ENCODE measurements at regions of chr6 and their contacts with region 1.

Region 1: GRCh38 chr6:28895134-28895812 is 28.5 kb downstream of the TRIM27 start:
- DNase-seq: peak; percentile 58 to 96 (median 86)
- H3K4me3 ChIP-seq: peak overlapping the region; percentile 50 to 97 (median 81)
- H3K27ac ChIP-seq: peak overlapping the region; percentile 92 to 100 (median 98)
- H3K27me3 ChIP-seq: no peaks in the 10 kb centered on the region
- CTCF ChIP-seq: peak in 9 of 56 donors; percentile 5 to 28 (median 16)

Region 2: GRCh38 chr6:28863604-28864320 is 31.5 kb before region 1 on chr6:
- intact Hi-C with region 1: loop called (anchors 2 kb)
- DNase-seq: peak; percentile 67 to 87 (median 79)
- H3K4me3 ChIP-seq: peak overlapping the region; percentile 52 to 97 (median 82)
- H3K27ac ChIP-seq: peak overlapping the region in 56 of 59 donors; percentile 1 to 92 (median 74)
- H3K27me3 ChIP-seq: no peaks in the 10 kb centered on the region
- CTCF ChIP-seq: peak in 17 of 56 donors; percentile 2 to 40 (median 16)

Region 3: GRCh38 chr6:28880894-28881780 is 14.1 kb before region 1 on chr6:
- intact Hi-C with region 1: loop called in 1 of 2 experiments (anchors 2 kb)
- DNase-seq: peak; percentile 51 to 83 (median 68)
- H3K4me3 ChIP-seq: peak overlapping the region; percentile 33 to 79 (median 64)
- H3K27ac ChIP-seq: peak overlapping the region in 13 of 59 donors; percentile 0 to 55 (median 17)
- H3K27me3 ChIP-seq: peaks cover 0 to 45% (median 2%) of the 10 kb centered on the region in 45 donors
- CTCF ChIP-seq: peak in 4 of 56 donors; percentile 13 to 23 (median 18)

Region 4: GRCh38 chr6:28923318-28924102 is 28.2 kb after region 1 on chr6 and contains the start of gene TRIM27:
- intact Hi-C with region 1: loop called (anchors 2 kb)
- DNase-seq: peak in 9 of 10 donors; percentile 67 to 94 (median 88)
- H3K4me3 ChIP-seq: peak within 1 kb of the TSS; percentile 72 to 100 (median 95)
- H3K27ac ChIP-seq: peak within 1 kb of the TSS; percentile 57 to 99 (median 94)
- H3K27me3 ChIP-seq: no peaks in the 10 kb centered on the region
- CTCF ChIP-seq: peak in 35 of 56 donors; percentile 4 to 53 (median 26)
- total RNA-seq, gene TRIM27: 31.7 to 61.4 (median 42.6) TPM